HCT116 (cell line): ENCODE measurements at regions of chr22 and their contacts with region 1.

Region 1: GRCh38 chr22:17057959-17058814 is 26.6 kb upstream of the IL17RA start:
- DNase-seq: peak; percentile 45
- ATAC-seq: peak; percentile 95
- H3K4me3 ChIP-seq: no peak overlapping the region
- H3K27ac ChIP-seq: no peak overlapping the region
- H3K4me1 ChIP-seq: no peaks in the 10 kb centered on the region
- H3K27me3 ChIP-seq: no peaks in the 10 kb centered on the region
- CTCF ChIP-seq: peak; percentile 53 to 96 (median 94); a peak in 5 of 6 replicates
- POLR2A ChIP-seq: no peak
- RAD21 ChIP-seq: peak; percentile 64

Region 2: DNA sequence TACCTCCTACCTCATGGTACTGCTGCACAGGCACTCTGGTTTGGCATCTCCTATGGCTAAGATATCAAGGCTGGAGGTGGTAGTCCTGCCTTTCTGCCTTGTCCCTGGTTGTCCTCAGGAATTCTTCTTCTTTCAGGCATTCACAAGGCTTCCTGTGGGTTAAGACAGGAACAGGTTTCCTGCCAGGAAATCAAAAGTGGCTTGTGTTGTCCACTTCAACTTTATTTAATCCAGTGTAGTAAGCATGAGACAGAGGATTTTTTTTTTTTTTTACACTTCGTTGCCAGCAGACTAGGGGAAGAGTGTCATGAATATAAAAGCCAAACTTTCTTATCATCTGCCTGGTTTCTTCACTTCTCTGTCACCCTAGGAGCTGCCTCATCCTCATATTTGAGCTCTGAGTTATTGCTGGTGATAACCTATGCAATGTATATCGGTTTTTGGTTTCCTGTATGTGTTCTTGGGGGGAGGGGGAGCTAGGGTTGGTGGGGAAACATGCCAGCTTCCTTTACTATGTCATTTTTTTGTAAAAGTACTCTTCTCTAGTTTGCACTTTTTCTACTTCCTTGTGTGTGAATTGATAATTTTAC is 283.2 kb before region 1 on chr22:
- CTCF ChIA-PET with region 1: interaction called, 17 read pairs
- POLR2A ChIA-PET with region 1: no interaction called
- RAD21 ChIA-PET with region 1: interaction called in 1 of 2 experiments, 4 read pairs
- intact Hi-C with region 1: no loop called
- DNase-seq: no peak
- ATAC-seq: peak; percentile 50; the same call in 1 of the 2 replicates
- H3K4me3 ChIP-seq: no peak overlapping the region
- H3K27ac ChIP-seq: no peak overlapping the region
- H3K4me1 ChIP-seq: no peaks in the 10 kb centered on the region
- H3K27me3 ChIP-seq: no peaks in the 10 kb centered on the region
- CTCF ChIP-seq: no peak
- POLR2A ChIP-seq: no peak
- RAD21 ChIP-seq: no peak

Region 3: DNA sequence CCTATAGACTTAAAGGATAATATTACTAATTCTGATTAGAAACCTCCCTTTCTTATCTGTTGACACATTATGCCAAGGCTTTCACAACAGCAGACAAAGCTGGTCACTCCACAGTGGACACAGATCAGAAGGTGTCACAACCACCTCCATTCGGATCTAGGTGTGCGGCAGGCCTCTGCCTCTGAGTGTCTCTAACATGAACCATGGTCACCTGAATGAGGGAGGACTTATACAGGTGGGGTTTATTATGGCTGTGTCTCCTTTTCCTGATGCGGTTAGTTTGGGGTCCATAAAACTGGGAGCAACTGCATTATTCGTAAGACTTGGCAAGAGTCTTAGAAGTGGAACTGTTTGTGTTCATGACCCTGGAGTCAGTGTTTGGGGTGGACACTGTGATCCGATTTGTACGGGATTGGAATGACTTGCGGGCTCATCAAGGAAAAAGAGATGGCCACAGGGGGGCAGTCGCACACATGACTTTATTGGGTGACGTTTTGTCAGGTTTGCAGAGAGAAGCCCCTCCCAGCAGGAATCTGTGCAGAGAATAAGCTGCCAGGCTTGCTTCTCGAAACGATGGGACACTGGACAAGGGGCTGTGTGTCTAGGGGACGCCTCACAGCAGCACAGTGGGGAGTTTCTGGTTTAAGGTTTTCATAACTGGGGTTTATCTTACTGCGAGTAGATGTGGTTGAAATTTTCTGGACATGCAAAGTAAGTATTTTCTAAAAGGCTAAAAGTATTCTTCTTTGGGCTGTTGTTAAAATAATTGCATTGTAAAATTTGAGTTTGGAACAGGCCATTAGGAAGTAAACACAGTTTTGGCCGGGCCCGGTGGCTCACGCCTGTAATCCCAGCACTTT is 140.8 kb before region 1 on chr22:
- CTCF ChIA-PET with region 1: interaction called, 63 read pairs
- POLR2A ChIA-PET with region 1: interaction called, 3 read pairs
- RAD21 ChIA-PET with region 1: interaction called in 1 of 2 experiments, 7 read pairs
- intact Hi-C with region 1: loop called (anchors 1 kb)
- DNase-seq: peak; percentile 65
- ATAC-seq: peak; percentile 95
- H3K4me3 ChIP-seq: no peak overlapping the region
- H3K27ac ChIP-seq: no peak overlapping the region
- H3K4me1 ChIP-seq: peaks cover 4 to 6% of the 10 kb centered on the region in 2 experiments
- H3K27me3 ChIP-seq: peaks cover 9% of the 10 kb centered on the region; the same call in 1 of the 2 replicates
- CTCF ChIP-seq: peak; percentile 41 to 81 (median 79); a peak in 5 of 6 replicates
- POLR2A ChIP-seq: no peak
- RAD21 ChIP-seq: peak; percentile 51; the same call in 1 of the 2 replicates

Region 4: GRCh38 chr22:16932577-16932976 is 125.6 kb before region 1 on chr22:
- CTCF ChIA-PET with region 1: interaction called, 19 read pairs
- POLR2A ChIA-PET with region 1: no interaction called
- RAD21 ChIA-PET with region 1: interaction called, 6 to 11 read pairs
- intact Hi-C with region 1: no loop called
- DNase-seq: no peak
- ATAC-seq: no peak; the same call in 1 of the 2 replicates
- H3K4me3 ChIP-seq: no peak overlapping the region
- H3K27ac ChIP-seq: no peak overlapping the region
- H3K4me1 ChIP-seq: no peaks in the 10 kb centered on the region
- H3K27me3 ChIP-seq: peaks cover 62% of the 10 kb centered on the region
- CTCF ChIP-seq: peak in 2 of 3 experiments; percentile 36 to 45; a peak in 4 of 6 replicates
- POLR2A ChIP-seq: no peak
- RAD21 ChIP-seq: peak; percentile 52

Region 5: DNA sequence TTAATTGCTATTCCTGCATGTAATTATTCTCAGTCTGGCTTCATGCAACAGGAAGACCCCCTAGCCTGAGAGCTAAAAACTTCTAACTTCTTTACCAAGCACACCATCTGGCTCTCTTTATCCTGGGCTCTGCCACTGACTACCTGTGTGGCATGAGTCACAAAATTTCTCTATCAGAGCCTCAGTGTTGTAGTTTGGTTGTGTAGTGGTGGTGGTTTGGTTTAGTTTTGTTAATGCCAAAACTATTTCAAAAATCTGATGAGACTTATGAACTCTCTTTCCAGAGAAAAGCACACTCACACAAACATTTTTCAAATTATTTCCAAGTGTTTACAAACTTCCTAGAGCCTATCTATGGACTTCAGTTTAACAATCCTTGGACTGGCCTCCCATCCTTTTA is 19.1 kb after region 1 on chr22:
- CTCF ChIA-PET with region 1: interaction called, 13 read pairs
- POLR2A ChIA-PET with region 1: no interaction called
- RAD21 ChIA-PET with region 1: no interaction called
- intact Hi-C with region 1: no loop called
- DNase-seq: no peak
- ATAC-seq: no peak; the same call in 1 of the 2 replicates
- H3K4me3 ChIP-seq: no peak overlapping the region
- H3K27ac ChIP-seq: no peak overlapping the region
- H3K4me1 ChIP-seq: peaks cover 9 to 24% of the 10 kb centered on the region in 2 experiments
- H3K27me3 ChIP-seq: no peaks in the 10 kb centered on the region
- CTCF ChIP-seq: no peak
- POLR2A ChIP-seq: no peak
- RAD21 ChIP-seq: no peak